Activated CD8-positive, alpha-beta T cell treated with anti-CD3 and anti-CD28 coated beads for 36 hours (primary cell): ENCODE measurements at regions of chr1 and their contacts with region 1.

Region 1: DNA sequence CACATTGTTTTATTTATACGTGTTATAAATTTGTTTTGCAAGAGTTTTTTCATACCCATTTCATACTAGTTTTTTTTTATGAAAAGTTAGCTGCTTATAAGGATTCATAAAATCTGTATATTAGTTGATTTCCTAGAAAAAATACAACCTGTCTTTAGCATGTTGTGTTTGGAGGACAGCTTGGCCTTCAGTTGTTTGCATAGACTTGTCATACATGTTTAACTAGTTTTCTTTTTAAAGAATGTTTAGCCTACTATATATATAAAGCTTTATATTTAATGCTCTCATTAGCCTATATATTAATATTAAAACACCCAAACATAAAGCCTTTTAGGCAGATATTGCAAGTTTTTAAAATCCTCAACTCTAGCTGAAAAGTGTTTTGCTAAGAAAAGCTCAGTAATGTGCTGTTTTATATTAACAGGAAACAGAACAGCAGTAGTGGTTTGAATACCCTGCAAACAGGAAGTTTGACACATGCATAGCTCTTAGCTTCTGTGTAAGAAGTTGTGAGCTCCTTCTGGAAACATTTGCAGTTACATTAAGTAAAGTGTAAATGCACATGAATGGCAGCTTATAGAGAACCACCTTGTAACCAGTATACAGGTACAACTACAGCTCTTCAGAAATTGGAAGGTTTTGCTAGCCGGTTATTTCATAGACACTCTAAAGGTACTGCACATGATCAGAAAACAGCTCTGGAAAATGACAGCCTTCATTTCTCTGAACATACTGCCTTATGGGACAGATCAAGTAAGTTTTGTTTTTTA is at the start of gene PRKACB:
- DNase-seq: no peak
- ATAC-seq: peak; percentile 89
- H3K4me3 Mint-ChIP-seq: peak within 1 kb of the TSS; percentile 83
- H3K27ac Mint-ChIP-seq: peak within 1 kb of the TSS; percentile 99
- H3K4me1 Mint-ChIP-seq: peaks cover 30% of the 10 kb centered on the region
- H3K27me3 Mint-ChIP-seq: no peaks in the 10 kb centered on the region
- CTCF ChIP-seq: no peak
- total RNA-seq, gene PRKACB: 39.9 to 44.7 TPM

Region 2: GRCh38 chr1:84108900-84109578 is 34.9 kb before region 1 on chr1:
- CTCF ChIA-PET with region 1: no interaction called
- POLR2A ChIA-PET with region 1: no interaction called
- intact Hi-C with region 1: no loop called
- DNase-seq: no peak
- ATAC-seq: no peak
- H3K4me3 Mint-ChIP-seq: no peak overlapping the region
- H3K27ac Mint-ChIP-seq: no peak overlapping the region
- H3K4me1 Mint-ChIP-seq: no peaks in the 10 kb centered on the region
- H3K27me3 Mint-ChIP-seq: no peaks in the 10 kb centered on the region
- CTCF ChIP-seq: no peak

Region 3: DNA sequence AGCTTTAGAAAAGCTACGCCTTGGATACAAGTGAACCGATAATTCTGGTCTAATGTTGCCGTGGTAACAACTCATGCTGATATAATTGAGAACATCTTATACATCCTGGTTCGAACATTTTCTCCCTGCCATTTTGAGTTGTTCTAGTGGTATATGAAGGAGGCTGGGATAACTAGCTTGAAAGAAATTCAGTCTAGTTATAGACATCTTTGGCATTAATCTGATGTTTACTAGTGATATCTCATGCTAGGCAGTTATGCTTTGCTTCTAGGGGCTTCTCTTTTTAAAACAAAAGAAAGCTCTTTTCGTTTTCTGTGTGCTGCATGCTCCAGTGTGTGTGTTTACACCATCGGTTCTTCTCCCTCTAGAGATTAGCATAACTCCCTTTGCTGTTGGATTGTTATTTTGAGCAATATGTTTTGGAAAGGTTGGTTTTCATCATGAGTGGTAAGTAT is 20.6 kb after region 1 on chr1:
- CTCF ChIA-PET with region 1: interaction called, 8 read pairs
- POLR2A ChIA-PET with region 1: interaction called, 15 read pairs
- intact Hi-C with region 1: no loop called
- DNase-seq: no peak
- ATAC-seq: peak; percentile 48
- H3K4me3 Mint-ChIP-seq: peak overlapping the region; percentile 68
- H3K27ac Mint-ChIP-seq: peak overlapping the region; percentile 58
- H3K4me1 Mint-ChIP-seq: peaks cover 80% of the 10 kb centered on the region
- H3K27me3 Mint-ChIP-seq: no peaks in the 10 kb centered on the region
- CTCF ChIP-seq: no peak

Region 4: GRCh38 chr1:84181350-84182005 is 37.5 kb after region 1 on chr1:
- CTCF ChIA-PET with region 1: interaction called, 10 read pairs
- POLR2A ChIA-PET with region 1: no interaction called
- intact Hi-C with region 1: no loop called
- DNase-seq: no peak
- ATAC-seq: no peak
- H3K4me3 Mint-ChIP-seq: no peak overlapping the region
- H3K27ac Mint-ChIP-seq: no peak overlapping the region
- H3K4me1 Mint-ChIP-seq: peaks cover 24% of the 10 kb centered on the region
- H3K27me3 Mint-ChIP-seq: no peaks in the 10 kb centered on the region
- CTCF ChIP-seq: no peak